ENCODE measurements at regions of chr1 and their contacts with region 1.

Region 1: DNA sequence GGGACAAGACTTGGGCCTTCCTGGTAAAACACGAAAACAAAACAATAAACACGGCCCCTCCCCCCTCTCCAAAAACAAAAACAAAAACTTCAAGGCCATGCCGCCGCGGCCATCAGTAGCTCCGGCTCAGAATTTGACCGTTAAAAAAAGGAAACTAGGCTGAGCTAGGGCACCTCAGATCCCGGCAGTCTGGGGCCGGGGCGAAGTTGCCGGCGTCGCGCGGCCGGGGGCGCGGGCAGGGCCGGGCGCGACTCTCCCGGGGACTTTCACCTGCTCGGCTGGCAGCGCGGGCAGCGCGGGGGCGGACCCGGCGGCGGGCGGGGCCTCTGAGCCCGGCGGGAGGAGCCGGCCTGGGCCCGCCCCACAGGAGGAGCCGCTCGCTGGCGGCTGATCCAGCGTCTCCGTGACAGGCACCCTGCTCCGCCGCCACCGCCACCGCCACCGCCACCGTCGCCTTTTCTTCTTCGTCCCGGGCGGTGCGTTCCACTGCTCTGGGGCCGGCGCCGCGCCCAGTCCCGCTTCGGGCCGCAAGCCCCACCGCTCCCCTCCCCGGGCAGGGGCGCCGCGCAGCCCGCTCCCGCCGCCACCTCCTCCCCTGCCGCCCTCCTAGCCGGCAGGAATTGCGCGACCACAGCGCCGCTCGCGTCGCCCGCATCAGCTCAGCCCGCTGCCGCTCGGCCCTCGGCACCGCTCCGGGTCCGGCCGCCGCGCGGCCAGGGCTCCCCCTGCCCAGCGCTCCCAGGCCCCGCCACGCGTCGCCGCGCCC is at the start of gene NOS1AP:
- DNase-seq: peak; percentile 76 to 91 (median 86)
- ATAC-seq: peak; percentile 90 to 99 (median 96)
- H3K4me3 ChIP-seq: peak within 1 kb of the TSS; percentile 51 to 86 (median 67)
- H3K27ac ChIP-seq: peak within 1 kb of the TSS in 10 of 12 donors; percentile 54 to 81 (median 70)
- H3K4me1 ChIP-seq: peaks cover 0 to 38% (median 7%) of the 10 kb centered on the region in 12 donors
- H3K27me3 ChIP-seq: peaks cover 0 to 71% (median 4%) of the 10 kb centered on the region in 9 donors
- CTCF ChIP-seq: peak in 1 of 12 donors; percentile 19
- POLR2A ChIP-seq: peak in 1 of 2 donors; percentile 65
- total RNA-seq, gene NOS1AP: 2.4 to 6.4 (median 4.5) TPM

Region 2: GRCh38 chr1:162133566-162133965 is 64.1 kb after region 1 on chr1:
- intact Hi-C with region 1: loop called in 1 of 10 experiments (anchors 5 kb)
- DNase-seq: no peak
- ATAC-seq: no peak
- H3K4me3 ChIP-seq: no peak overlapping the region
- H3K27ac ChIP-seq: peak overlapping the region in 3 of 12 donors; percentile 7 to 28 (median 13)
- H3K4me1 ChIP-seq: peaks cover 0 to 72% (median 20%) of the 10 kb centered on the region in 12 donors
- H3K27me3 ChIP-seq: no peaks in the 10 kb centered on the region
- CTCF ChIP-seq: no peak
- POLR2A ChIP-seq: no peak

Region 3: GRCh38 chr1:162422662-162423375 is 353.3 kb after region 1 on chr1:
- intact Hi-C with region 1: no loop called
- DNase-seq: no peak
- ATAC-seq: peak in 1 of 4 donors; percentile 58
- H3K4me3 ChIP-seq: no peak overlapping the region
- H3K27ac ChIP-seq: no peak overlapping the region
- H3K4me1 ChIP-seq: peaks cover 0 to 40% (median 0%) of the 10 kb centered on the region in 12 donors
- H3K27me3 ChIP-seq: no peaks in the 10 kb centered on the region
- CTCF ChIP-seq: no peak
- POLR2A ChIP-seq: no peak